Activated CD8-positive, alpha-beta T cell treated with anti-CD3 and anti-CD28 coated beads for 36 hours (primary cell): ENCODE measurements at regions of chr7 and their contacts with region 1.

Region 1: DNA sequence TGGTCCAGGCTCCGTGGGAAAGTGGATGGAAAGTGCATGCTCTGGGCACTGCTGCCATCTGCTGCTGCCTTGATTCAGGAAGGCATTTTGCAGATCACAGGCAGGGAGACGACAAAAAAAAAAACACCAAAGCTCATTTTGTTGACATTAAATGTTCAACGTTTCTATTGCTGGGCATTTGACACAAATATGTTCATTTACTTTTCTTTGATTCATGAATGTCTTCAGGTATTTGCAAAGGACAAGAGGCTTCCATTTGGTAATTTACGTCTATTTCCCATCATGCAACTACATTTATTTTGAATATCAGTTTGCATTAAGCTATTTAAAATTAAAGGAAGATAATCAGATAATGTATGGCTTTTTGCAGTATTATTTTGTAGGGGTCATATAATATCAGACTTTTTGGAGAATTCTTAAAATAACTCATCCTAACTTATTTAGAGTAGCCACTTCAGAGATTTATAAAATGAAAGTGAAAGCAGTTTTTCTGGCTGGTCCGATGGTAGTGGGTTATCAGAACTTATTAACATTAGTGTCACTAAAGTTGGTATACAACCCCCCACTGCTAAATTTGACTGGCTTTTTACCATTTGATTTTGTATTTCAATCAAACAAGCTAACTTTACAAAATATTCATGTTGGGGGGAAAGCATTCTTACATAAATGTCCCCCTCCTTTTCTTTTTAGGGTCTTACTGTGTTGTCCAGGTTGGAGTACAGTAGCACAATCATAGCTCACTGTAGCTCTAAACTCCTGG is 65.3 kb downstream of the PDIA4 start:
- DNase-seq: peak; percentile 78
- ATAC-seq: peak; percentile 65
- H3K4me3 Mint-ChIP-seq: peak overlapping the region; percentile 76
- H3K27ac Mint-ChIP-seq: peak overlapping the region; percentile 84
- H3K4me1 Mint-ChIP-seq: peaks cover 29% of the 10 kb centered on the region
- H3K27me3 Mint-ChIP-seq: no peaks in the 10 kb centered on the region
- CTCF ChIP-seq: peak; percentile 90

Region 2: GRCh38 chr7:148575640-148576411 is 387.2 kb before region 1 on chr7:
- CTCF ChIA-PET with region 1: interaction called, 25 read pairs
- POLR2A ChIA-PET with region 1: no interaction called
- intact Hi-C with region 1: loop called (anchors 2 kb)
- DNase-seq: peak; percentile 85
- ATAC-seq: peak; percentile 97
- H3K4me3 Mint-ChIP-seq: no peak overlapping the region
- H3K27ac Mint-ChIP-seq: no peak overlapping the region
- H3K4me1 Mint-ChIP-seq: peaks cover 11% of the 10 kb centered on the region
- H3K27me3 Mint-ChIP-seq: peaks cover 11% of the 10 kb centered on the region
- CTCF ChIP-seq: peak; percentile 89

Region 3: DNA sequence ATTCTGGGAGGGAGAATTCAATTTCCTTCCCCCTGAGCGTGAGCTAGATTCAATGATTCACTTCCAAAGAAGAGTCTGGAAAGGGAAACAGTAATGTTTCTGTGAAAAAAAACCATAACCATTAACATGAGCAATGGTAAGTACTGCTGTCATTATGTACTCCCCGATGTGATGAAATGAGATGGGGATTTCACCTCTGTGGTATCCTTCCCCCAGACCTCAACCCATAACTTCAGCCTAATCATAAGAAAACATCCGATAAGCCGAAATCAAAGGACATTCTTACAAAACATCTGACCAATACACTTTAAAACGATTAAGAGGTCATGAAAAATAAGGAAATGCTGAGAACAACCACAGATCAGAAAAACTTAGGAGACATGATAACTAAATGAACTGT is 106.1 kb before region 1 on chr7:
- CTCF ChIA-PET with region 1: interaction called, 35 read pairs
- POLR2A ChIA-PET with region 1: no interaction called
- intact Hi-C with region 1: no loop called
- DNase-seq: peak; percentile 20
- ATAC-seq: peak; percentile 76
- H3K4me3 Mint-ChIP-seq: peak overlapping the region; percentile 33
- H3K27ac Mint-ChIP-seq: peak overlapping the region; percentile 81
- H3K4me1 Mint-ChIP-seq: peaks cover 39% of the 10 kb centered on the region
- H3K27me3 Mint-ChIP-seq: no peaks in the 10 kb centered on the region
- CTCF ChIP-seq: no peak

Region 4: DNA sequence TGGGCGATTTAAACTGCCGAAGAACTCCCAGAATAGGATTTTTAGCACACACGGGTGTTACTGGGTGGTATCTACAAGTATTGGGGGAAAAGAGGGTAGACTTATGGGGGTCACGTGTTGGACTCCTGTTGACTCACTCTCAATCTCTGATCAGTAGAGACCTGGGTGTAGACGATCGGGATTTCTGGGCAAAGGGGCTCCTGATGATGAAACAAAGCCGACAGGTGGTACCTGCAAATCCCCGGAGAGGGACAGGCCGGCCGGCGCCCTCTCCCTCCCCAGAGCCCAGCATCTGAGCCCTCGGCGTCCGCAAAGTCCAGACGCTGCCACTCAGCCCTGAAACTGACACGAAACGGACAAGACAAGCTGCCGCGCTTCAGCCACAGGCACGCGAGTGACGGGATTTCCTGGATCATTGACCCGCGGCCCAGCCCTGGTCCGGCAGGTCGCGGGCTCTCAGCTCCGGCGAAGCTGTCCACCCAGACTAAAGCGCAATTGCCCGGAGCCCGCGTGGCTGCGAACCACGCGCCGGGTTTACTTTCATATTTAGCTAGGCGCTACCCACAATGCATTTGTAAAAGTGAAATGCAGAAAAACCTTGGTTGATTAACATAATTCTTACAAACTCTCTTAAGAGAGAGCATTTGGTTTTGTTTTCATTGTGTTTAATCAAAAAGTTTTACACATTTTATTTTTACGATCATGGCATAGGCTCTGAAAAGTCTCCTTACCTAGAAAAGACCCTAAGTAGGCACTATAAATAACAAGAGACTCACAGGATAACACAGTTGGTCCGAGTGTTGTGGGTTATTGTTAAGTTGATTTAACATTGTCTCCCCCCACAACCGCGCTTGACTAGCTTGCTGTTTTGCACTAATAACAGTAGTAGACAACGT is 22.1 kb before region 1 on chr7:
- CTCF ChIA-PET with region 1: interaction called, 15 read pairs
- POLR2A ChIA-PET with region 1: interaction called, 5 read pairs
- intact Hi-C with region 1: no loop called
- DNase-seq: peak; percentile 84
- ATAC-seq: peak; percentile 72
- H3K4me3 Mint-ChIP-seq: peak overlapping the region; percentile 98
- H3K27ac Mint-ChIP-seq: peak overlapping the region; percentile 100
- H3K4me1 Mint-ChIP-seq: peaks cover 17% of the 10 kb centered on the region
- H3K27me3 Mint-ChIP-seq: no peaks in the 10 kb centered on the region
- CTCF ChIP-seq: no peak

Region 5: DNA sequence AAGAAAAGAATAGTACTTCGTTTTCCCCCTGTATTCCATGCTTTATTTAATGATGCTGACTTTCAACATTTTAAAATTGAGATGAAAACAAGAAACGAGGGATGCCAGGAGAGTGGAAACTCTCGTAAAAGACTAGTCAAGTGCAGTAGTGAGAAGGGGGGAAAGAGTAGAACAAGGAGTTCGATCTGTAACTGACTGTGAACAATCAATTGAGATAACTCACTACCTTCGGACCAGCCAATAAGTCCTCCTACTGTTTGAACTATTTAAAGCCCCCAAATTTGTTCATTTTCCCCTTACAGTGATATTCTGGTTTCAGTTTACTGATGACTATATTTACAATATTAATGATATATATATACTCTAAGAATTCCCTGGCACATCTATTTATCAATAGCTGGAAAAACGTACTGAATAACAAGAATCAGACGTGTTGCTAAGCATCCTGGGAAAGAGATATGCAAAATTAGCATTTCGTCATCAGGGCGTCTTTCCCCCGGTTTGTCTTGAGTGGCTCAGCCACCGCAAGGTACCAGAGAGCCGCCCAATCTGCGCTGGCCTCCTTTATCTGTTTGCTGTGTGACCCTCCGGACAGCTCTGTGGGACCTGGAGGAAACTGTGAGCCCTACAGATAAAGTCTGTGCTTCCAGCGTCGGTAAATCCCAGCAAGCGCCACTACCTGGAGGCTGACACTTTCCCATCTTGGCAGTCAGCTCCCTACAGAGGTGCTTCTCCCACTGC is 24.2 kb after region 1 on chr7:
- CTCF ChIA-PET with region 1: interaction called, 14 read pairs
- POLR2A ChIA-PET with region 1: no interaction called
- intact Hi-C with region 1: no loop called
- DNase-seq: peak; percentile 90
- ATAC-seq: peak; percentile 81
- H3K4me3 Mint-ChIP-seq: peak overlapping the region; percentile 90
- H3K27ac Mint-ChIP-seq: peak overlapping the region; percentile 95
- H3K4me1 Mint-ChIP-seq: peaks cover 44% of the 10 kb centered on the region
- H3K27me3 Mint-ChIP-seq: peaks cover 4% of the 10 kb centered on the region
- CTCF ChIP-seq: no peak